Esophagus muscularis mucosa (tissue), 4 donors: ENCODE measurements at regions of chr12 and their contacts with region 1.

Region 1: GRCh38 chr12:575948-576612 is 87.2 kb downstream of the NINJ2 start:
- DNase-seq: no peak
- H3K4me3 ChIP-seq: peak overlapping the region; percentile 17 to 29 (median 24)
- H3K27ac ChIP-seq: peak overlapping the region; percentile 29 to 71 (median 57)
- H3K4me1 ChIP-seq: peaks cover 47 to 53% (median 48%) of the 10 kb centered on the region in 4 donors
- H3K27me3 ChIP-seq: no peaks in the 10 kb centered on the region
- CTCF ChIP-seq: peak in 2 of 3 experiments; percentile 99 to 100
- EP300 ChIP-seq: no peak
- POLR2A ChIP-seq: no peak

Region 2: DNA sequence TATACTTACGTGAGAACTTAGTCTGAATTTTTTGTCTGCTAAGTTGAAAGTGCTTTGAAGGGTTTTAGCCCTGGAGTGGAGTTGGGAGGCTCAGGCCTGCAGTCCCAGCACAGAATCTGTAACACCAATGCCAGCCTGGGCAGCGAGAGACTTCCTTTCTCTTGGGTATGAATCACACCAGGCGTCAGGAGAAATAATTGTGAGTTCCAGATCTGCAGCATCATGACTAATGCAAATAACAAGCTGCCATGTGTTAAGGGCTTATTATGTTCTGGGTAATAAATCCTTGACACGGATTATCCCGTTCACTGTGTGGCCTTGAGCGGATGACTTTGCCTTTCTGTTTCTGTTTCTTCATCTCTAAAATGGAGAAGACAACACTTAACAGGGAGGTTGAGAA is 45.8 kb before region 1 on chr12:
- intact Hi-C with region 1: no loop called
- DNase-seq: no peak
- H3K4me3 ChIP-seq: no peak overlapping the region
- H3K27ac ChIP-seq: no peak overlapping the region
- H3K4me1 ChIP-seq: no peaks in the 10 kb centered on the region
- H3K27me3 ChIP-seq: peaks cover 0 to 15% (median 0%) of the 10 kb centered on the region in 4 donors
- CTCF ChIP-seq: no peak
- EP300 ChIP-seq: no peak
- POLR2A ChIP-seq: no peak

Region 3: GRCh38 chr12:630656-631632 is 54.9 kb after region 1 on chr12:
- intact Hi-C with region 1: loop called (anchors 5 kb)
- DNase-seq: no peak
- H3K4me3 ChIP-seq: peak overlapping the region; percentile 22 to 51 (median 24)
- H3K27ac ChIP-seq: peak overlapping the region; percentile 62 to 82 (median 72)
- H3K4me1 ChIP-seq: peaks cover 25 to 40% (median 37%) of the 10 kb centered on the region in 4 donors
- H3K27me3 ChIP-seq: no peaks in the 10 kb centered on the region
- CTCF ChIP-seq: no peak
- EP300 ChIP-seq: no peak
- POLR2A ChIP-seq: peak; percentile 24